Gastrocnemius medialis (tissue), 4 donors: ENCODE measurements at regions of chr5 and their contacts with region 1.

Region 1: DNA sequence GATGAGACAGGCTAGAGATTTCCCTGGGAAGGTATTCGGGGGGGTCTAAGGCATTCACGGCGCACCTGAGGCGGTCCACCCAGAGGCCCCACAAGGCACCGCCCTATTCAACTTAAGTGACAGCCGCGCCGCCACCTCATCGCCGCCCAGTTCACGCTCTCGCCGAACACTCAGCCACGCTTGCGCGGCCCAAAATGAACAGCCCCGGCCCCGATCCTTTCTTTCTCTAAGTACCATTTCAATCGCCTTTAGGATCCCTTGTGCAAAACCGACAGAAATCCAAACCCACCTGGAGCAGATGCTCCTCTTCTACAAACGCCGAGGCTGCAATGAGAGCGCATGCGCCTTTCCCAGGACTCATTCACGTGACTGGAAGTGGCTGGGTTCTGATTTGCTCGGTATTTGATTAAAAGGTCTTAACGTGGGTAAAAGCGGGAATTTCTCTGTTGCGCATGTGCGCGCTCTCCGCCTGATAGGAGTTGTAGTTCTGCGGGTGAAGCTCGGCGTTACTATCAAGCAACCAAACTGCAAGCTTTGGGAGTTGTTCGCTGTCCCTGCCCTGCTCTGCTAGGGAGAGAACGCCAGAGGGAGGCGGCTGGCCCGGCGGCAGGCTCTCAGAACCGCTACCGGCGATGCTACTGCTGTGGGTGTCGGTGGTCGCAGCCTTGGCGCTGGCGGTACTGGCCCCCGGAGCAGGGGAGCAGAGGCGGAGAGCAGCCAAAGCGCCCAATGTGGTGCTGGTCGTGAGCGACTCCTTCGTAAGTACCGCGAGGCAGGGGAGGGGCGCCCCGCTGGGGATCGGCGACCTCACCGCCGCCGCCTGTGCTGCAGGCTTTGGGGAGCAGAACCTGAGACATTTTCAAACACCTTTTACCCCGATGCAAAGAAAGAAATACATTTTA is at the starts of genes ARSK and SKIC3:
- DNase-seq: peak; percentile 91 to 96
- ATAC-seq: peak; percentile 98
- H3K4me3 ChIP-seq: peak within 1 kb of the TSS; percentile 69 to 96 (median 86)
- H3K27ac ChIP-seq: peak within 1 kb of the TSS; percentile 83 to 93 (median 88)
- H3K4me1 ChIP-seq: peaks cover 20 to 27% of the 10 kb centered on the region in 2 donors
- H3K27me3 ChIP-seq: no peaks in the 10 kb centered on the region
- CTCF ChIP-seq: peak in 4 of 5 experiments; percentile 32 to 49 (median 33)
- POLR2A ChIP-seq: peak; percentile 64 to 83
- total RNA-seq, gene ARSK: 2.3 to 4.3 (median 2.8) TPM
- total RNA-seq, gene SKIC3: 40.6 to 54.4 (median 43.4) TPM

Region 2: GRCh38 chr5:95620030-95620869 is 65.4 kb after region 1 on chr5 and contains the start of gene GPR150:
- in situ Hi-C with region 1: no loop called
- intact Hi-C with region 1: loop called (anchors 2 kb)
- DNase-seq: peak in 1 of 2 donors; percentile 59
- ATAC-seq: peak; percentile 69 to 70
- H3K4me3 ChIP-seq: peak within 1 kb of the TSS; percentile 58 to 82 (median 66)
- H3K27ac ChIP-seq: peak within 1 kb of the TSS; percentile 29 to 70 (median 51)
- H3K4me1 ChIP-seq: peaks cover 6 to 16% of the 10 kb centered on the region in 2 donors
- H3K27me3 ChIP-seq: no peaks in the 10 kb centered on the region
- CTCF ChIP-seq: no peak
- POLR2A ChIP-seq: peak in 1 of 2 donors; percentile 13
- total RNA-seq, gene GPR150: 0.29 to 0.59 (median 0.29) TPM in 3 of 4 donors, not detected in the other

Region 3: DNA sequence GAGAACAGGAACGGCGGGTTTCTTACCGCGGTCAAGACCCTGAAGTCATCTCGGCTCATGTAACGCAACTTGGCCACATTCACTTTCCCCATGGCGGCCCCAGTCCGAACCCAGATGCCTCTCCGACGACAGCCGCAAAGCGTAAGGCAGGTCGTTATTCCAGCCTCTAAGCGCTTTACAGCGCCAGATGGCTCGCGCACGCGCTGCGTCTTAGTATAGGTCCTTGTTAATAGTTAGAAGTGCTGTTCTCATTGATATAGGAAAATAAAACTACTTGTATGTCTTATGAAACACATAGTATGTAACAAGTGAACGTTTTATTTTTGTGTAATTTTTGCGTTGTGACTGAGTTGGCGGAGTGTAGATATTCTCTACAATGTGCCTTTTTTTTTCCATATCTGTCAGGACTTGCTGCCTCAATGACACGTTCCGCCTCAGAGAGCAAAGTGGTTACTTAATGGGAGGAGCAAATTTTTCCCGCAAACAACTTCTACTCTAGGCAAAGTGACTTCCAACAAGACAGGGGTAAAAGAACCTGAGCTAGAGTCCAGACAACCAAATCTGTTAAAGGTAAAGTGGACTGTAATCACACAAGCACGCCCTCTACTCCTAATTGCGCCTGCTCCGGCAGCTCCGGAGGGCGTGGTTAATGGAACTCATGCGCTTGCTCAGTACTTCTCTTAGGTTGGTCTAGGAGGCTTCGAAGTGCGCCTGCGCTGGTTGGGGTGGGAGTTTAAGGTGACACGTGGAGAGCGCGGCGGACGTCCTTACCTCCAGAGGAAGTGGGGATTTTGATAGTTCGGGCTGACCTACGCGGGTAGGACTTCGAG is 1628.4 kb after region 1 on chr5 and contains the start of gene RIOK2:
- in situ Hi-C with region 1: no loop called
- intact Hi-C with region 1: loop called (anchors 10 kb)
- DNase-seq: peak; percentile 86 to 92
- ATAC-seq: peak; percentile 95 to 96
- H3K4me3 ChIP-seq: peak within 1 kb of the TSS; percentile 65 to 96 (median 82)
- H3K27ac ChIP-seq: peak within 1 kb of the TSS; percentile 84 to 92 (median 88)
- H3K4me1 ChIP-seq: peaks cover 11 to 21% of the 10 kb centered on the region in 2 donors
- H3K27me3 ChIP-seq: no peaks in the 10 kb centered on the region
- CTCF ChIP-seq: no peak
- POLR2A ChIP-seq: peak; percentile 56 to 62
- total RNA-seq, gene RIOK2: 9.8 to 34.4 (median 17.3) TPM